ENCODE measurements at regions of chr10 and their contacts with region 1.

Region 1: GRCh38 chr10:88932539-88933256 is 19.9 kb downstream of the ACTA2 start:
- DNase-seq: peak; percentile 84
- H3K27ac ChIP-seq: no peak overlapping the region
- CTCF ChIP-seq: peak; percentile 92

Region 2: DNA sequence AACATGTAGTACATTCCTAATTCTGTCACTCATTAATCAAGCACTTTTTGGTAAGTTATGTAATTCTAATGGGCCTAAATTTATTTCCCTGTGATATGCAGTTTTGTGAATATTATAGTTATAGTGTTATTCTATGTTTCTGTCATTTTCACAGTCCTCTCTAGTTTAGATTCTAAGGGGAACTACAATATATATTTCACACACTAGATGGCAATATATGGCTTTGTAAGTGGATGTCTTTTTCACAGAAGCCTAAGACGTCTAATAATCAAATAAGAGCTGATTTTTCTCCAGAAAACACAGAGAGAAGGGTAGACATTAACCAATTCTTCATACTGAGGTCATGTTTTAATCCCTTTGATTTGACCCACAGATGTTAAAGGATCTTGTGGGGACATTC is 367.6 kb before region 1 on chr10:
- CTCF ChIA-PET with region 1: interaction called, 11 read pairs
- POLR2A ChIA-PET with region 1: interaction called, 3 read pairs
- DNase-seq: peak; percentile 51
- H3K27ac ChIP-seq: no peak overlapping the region
- CTCF ChIP-seq: peak; percentile 60

Region 3: DNA sequence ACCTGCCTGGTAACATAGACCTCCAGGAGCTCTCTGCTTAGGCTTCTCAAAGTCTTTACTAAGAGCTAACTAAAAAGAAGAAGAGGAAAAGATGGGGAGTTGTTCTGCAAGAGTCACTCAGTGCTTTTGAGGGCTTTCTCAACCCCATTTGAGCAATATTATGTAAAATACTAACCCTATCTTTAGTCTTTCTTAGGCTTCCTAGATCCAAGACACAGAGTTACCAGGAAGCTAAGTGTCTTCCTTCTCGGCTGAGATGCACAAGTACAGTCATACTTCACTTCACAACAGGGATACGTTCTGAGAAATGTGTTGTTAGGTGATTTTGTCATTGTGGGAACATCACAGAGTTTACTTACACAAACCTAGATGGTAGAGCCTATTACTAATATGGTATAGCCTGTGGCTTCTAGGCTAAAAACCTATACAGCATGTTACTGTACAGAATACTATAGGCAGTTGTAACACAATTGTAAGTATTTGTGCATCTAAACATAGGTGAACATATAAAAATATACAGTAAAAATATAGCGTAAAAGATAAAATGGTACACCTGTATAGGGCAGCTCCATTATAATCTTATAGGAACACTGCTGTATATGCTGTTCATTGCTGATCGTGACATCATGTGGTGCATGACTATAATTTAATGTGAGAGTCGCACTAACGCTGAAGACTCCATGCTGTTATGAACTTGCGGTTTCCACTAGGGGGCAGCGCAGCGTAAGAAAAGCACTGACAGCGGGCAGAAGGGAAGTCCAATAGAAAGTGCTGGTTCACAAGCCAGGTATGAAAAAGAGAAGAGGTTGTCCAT is 97.4 kb before region 1 on chr10:
- CTCF ChIA-PET with region 1: interaction called, 66 read pairs
- POLR2A ChIA-PET with region 1: no interaction called
- DNase-seq: peak; percentile 80
- H3K27ac ChIP-seq: no peak overlapping the region
- CTCF ChIP-seq: peak; percentile 83

Region 4: DNA sequence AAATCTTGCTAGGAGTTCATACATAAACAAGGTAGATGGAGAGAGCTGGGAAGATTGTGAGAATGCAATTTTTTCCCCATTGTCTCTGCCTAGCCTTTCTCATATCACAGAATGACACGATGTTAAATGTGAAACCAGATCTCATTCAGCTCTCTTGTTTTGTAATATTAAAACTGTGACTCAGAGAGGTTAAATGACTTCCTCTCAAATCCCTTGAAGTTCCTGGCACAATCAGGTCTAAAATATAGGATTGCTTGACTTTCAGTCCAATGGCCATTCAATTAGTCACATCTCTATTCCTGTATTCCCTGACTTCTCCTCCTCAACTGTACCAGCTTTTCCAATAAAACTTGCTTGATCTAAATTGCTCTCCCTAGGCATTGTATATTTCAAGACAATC is 84.2 kb before region 1 on chr10:
- CTCF ChIA-PET with region 1: interaction called, 11 read pairs
- POLR2A ChIA-PET with region 1: no interaction called
- DNase-seq: peak; percentile 56
- H3K27ac ChIP-seq: no peak overlapping the region
- CTCF ChIP-seq: no peak

Region 5: DNA sequence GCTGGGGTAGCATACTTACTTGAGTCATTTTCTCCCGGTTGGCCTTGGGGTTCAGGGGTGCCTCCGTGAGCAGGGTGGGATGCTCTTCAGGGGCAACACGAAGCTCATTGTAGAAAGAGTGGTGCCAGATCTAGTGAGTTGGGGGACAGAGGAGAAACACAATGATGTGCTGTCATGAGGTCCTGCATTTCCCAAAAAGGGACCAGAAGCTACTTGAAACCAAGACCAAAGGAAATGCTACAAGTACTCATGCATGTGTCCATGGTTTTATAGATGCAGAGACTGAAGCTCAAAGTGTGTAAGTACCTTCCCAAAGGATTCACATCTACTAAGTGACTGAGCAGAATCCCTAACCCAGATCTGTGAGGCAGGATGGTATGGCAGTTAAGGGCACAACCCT is 11.1 kb after region 1 on chr10:
- CTCF ChIA-PET with region 1: interaction called, 10 read pairs
- POLR2A ChIA-PET with region 1: no interaction called
- DNase-seq: no peak
- H3K27ac ChIP-seq: no peak overlapping the region
- CTCF ChIP-seq: no peak

Region 6: GRCh38 chr10:88957381-88957780 is 24.7 kb after region 1 on chr10:
- CTCF ChIA-PET with region 1: no interaction called
- POLR2A ChIA-PET with region 1: no interaction called
- DNase-seq: no peak
- H3K27ac ChIP-seq: no peak overlapping the region
- CTCF ChIP-seq: no peak

Region 7: GRCh38 chr10:88990384-88991160 is 57.9 kb after region 1 on chr10 and contains the start of gene FAS:
- CTCF ChIA-PET with region 1: interaction called, 14 read pairs
- POLR2A ChIA-PET with region 1: interaction called, 3 read pairs
- DNase-seq: peak; percentile 89
- H3K27ac ChIP-seq: peak within 1 kb of the TSS; percentile 100
- CTCF ChIP-seq: no peak

Region 8: DNA sequence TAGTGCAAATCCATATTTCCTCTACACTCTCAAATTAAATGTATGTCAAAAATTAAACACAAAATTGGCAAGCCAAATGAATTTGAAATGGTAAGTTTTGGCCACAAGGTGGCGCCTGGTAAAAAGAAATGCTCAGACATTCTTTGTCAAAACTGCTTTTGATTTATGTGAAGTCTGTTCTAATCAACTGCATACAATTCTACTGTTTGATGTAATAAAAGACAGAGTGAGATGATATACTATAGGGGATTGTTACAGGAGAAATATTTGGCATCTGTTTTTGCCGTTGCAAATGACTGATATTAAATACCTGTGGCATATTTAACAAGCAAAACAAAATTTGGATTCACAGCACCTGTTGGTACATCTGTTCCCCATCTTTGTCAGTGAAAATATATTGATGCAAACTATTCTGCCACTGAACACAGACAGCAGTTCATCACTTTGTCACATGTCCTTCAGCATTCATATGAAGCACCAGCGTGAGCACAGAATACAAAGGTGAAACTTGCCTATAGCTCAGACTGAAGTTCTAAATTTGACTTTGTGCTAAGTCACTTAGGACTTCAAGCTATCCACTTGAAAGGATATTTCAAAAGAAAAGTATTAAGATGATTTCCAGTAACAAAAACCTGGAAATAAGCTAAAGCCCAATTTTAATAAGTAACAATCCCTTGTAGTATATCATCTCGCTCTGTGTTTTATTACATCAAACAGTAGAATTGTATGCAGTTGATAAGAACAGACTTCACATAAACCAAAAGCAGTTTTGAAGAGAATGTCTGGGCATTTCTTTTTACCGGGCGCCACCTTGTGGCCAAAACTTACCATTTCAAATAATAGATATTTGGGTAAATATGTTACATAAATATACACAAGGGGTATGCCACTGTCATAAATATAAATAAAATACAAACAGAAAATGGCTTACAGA is 284.6 kb after region 1 on chr10:
- CTCF ChIA-PET with region 1: interaction called, 11 read pairs
- POLR2A ChIA-PET with region 1: no interaction called
- DNase-seq: no peak
- H3K27ac ChIP-seq: no peak overlapping the region
- CTCF ChIP-seq: peak; percentile 60